Endothelial cell of umbilical vein (primary cell): ENCODE measurements at regions of chr10 and their contacts with region 1.

Region 1: DNA sequence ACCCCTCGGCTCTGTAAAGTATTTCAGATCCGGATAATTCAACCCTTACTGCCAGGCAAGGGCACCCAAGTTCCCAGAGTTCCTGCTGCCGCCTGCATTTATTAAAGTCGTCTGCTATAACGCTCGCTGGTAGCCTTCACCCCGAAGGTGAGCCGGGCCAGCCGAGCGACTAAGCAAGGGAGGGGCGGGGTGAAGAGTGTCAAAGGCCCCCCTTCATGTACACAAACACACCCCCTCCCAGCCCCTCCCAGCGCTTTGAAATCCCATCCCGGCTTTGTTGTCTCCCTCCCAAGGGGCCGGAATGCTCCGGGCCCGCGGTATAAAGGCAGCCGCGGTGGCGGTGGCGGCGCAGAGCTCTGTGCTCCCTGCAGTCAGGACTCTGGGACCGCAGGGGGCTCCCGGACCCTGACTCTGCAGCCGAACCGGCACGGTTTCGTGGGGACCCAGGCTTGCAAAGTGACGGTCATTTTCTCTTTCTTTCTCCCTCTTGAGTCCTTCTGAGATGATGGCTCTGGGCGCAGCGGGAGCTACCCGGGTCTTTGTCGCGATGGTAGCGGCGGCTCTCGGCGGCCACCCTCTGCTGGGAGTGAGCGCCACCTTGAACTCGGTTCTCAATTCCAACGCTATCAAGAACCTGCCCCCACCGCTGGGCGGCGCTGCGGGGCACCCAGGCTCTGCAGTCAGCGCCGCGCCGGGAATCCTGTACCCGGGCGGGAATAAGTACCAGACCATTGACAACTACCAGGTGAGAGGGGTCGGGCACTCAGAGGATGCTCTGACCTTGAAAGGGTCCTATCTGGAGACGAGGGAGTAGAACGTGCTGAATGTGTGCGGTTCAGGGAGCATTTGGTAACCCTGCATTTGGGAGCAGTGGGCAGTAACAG is at the start of gene DKK1:
- DNase-seq: peak; percentile 89
- H3K4me3 ChIP-seq: peak within 1 kb of the TSS; percentile 90 to 98 (median 90)
- H3K27ac ChIP-seq: peak within 1 kb of the TSS; percentile 94
- H3K4me1 ChIP-seq: peaks cover 36% of the 10 kb centered on the region
- H3K27me3 ChIP-seq: no peaks in the 10 kb centered on the region
- CTCF ChIP-seq: peak; percentile 92 to 96
- POLR2A ChIP-seq: peak; percentile 99
- total RNA-seq, gene DKK1: 184 and 200 TPM in 2 replicates

Region 2: GRCh38 chr10:52297747-52298146 is 16.4 kb before region 1 on chr10:
- CTCF ChIA-PET with region 1: no interaction called
- POLR2A ChIA-PET with region 1: no interaction called
- dilution Hi-C with region 1: no loop called
- intact Hi-C with region 1: no loop called
- DNase-seq: no peak
- H3K4me3 ChIP-seq: no peak overlapping the region
- H3K27ac ChIP-seq: no peak overlapping the region
- H3K4me1 ChIP-seq: no peaks in the 10 kb centered on the region
- H3K27me3 ChIP-seq: no peaks in the 10 kb centered on the region
- CTCF ChIP-seq: no peak
- POLR2A ChIP-seq: no peak

Region 3: GRCh38 chr10:52334595-52334994 is 20.4 kb after region 1 on chr10:
- CTCF ChIA-PET with region 1: interaction called, 11 read pairs
- POLR2A ChIA-PET with region 1: interaction called, 7 read pairs
- dilution Hi-C with region 1: no loop called
- intact Hi-C with region 1: loop called (anchors 1 kb)
- DNase-seq: peak; percentile 62
- H3K4me3 ChIP-seq: peak overlapping the region in 1 of 3 experiments; percentile 21
- H3K27ac ChIP-seq: peak overlapping the region; percentile 81
- H3K4me1 ChIP-seq: peaks cover 57% of the 10 kb centered on the region
- H3K27me3 ChIP-seq: no peaks in the 10 kb centered on the region
- CTCF ChIP-seq: no peak
- POLR2A ChIP-seq: no peak

Region 4: DNA sequence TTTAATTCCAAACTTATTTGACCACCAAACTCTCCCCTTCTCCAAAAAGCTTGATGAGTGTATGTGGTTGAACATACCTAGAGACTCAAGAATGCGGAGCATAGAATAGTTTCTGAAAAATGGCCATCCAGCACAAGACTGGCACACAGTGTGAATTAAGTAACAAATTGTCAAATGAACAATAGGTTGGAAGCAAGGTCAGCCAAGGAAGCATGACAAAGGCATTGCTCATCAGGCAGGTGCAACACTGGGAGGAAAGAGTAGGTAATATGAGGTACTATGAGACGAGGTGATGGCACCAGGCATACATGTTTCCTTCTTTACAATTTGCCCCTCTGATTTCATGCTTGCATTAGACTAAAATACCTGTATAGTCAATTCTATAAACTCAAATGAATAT is 73.6 kb after region 1 on chr10:
- CTCF ChIA-PET with region 1: interaction called, 6 read pairs
- POLR2A ChIA-PET with region 1: no interaction called
- dilution Hi-C with region 1: no loop called
- intact Hi-C with region 1: loop called (anchors 2 kb)
- DNase-seq: peak; percentile 62
- H3K4me3 ChIP-seq: no peak overlapping the region
- H3K27ac ChIP-seq: no peak overlapping the region
- H3K4me1 ChIP-seq: peaks cover 9% of the 10 kb centered on the region
- H3K27me3 ChIP-seq: no peaks in the 10 kb centered on the region
- CTCF ChIP-seq: no peak
- POLR2A ChIP-seq: no peak

Region 5: DNA sequence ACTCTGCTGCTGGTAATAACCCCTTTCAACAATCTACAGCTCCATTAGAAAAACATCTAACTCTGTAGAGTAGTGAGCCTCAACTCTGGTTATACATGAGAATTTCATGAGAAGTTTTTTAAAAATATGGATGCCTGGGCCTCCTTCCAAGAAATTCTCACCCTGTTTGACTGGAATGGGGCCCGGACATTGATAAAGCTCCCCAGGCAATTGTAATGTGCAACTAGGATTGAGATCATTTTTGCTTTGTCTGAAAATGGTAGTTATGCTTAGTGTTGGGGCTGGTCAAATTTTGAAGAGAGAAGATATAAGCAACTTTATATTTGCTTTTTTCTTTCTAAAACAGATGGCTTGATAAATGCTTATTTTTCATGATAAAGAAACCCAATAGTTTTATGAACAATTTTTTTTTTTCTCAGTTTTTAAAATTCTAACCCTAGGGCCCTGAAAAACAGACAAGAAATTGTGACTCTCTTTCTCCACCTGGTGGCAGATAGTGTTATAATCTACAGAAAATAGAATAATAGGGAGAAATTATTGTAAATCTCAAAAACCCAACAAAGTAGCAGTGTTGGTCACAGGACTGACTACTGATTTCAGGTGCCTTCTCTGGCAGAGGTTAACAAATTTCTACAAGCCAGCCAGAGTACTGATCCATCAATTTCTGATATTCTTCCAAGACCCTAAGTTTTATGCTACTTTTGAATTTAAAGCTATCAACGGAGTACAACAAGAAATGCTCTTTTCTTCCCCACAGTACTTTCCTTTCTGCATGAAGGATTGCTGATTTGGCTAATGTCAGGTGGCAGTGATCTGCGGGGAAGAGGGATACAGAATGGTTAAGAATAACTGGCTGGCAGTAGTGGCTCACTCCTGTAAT is 174.7 kb after region 1 on chr10:
- CTCF ChIA-PET with region 1: interaction called, 630 read pairs
- POLR2A ChIA-PET with region 1: interaction called, 21 read pairs
- dilution Hi-C with region 1: no loop called
- intact Hi-C with region 1: loop called (anchors 1 kb)
- DNase-seq: peak; percentile 67
- H3K4me3 ChIP-seq: no peak overlapping the region
- H3K27ac ChIP-seq: peak overlapping the region; percentile 64
- H3K4me1 ChIP-seq: peaks cover 39% of the 10 kb centered on the region
- H3K27me3 ChIP-seq: no peaks in the 10 kb centered on the region
- CTCF ChIP-seq: peak in 1 of 2 donors; percentile 32
- POLR2A ChIP-seq: no peak

Region 6: DNA sequence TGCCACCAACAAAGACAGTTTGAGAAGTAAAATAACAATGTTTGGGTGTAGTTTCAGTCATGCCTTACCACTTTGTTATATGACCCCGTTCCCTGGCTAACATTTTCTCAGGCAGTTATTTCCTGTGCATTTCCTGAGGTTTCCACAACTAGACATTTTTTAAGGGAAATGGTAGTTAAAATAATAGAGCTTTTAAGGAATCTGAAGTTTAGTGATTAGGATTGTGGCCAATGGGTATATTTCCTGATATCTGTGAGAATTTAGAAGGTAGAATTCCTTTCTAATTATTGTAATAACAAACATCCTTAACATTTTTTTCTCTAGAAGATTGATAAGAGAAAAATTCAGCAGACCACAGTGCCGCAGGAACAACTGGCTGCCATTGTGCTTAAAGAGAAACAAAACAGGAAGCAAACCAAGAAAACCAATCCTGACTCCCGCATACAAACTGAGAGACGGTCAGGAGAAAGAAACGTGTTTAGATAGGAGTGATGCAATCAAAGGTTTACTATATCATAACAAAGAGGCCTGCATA is 264.8 kb after region 1 on chr10:
- CTCF ChIA-PET with region 1: interaction called, 9 read pairs
- POLR2A ChIA-PET with region 1: interaction called, 3 read pairs
- dilution Hi-C with region 1: no loop called
- intact Hi-C with region 1: loop called (anchors 1 kb)
- DNase-seq: peak; percentile 96
- H3K4me3 ChIP-seq: peak overlapping the region in 1 of 3 experiments; percentile 40
- H3K27ac ChIP-seq: peak overlapping the region; percentile 91
- H3K4me1 ChIP-seq: peaks cover 41% of the 10 kb centered on the region
- H3K27me3 ChIP-seq: no peaks in the 10 kb centered on the region
- CTCF ChIP-seq: no peak
- POLR2A ChIP-seq: no peak